ENCODE measurements at regions of chr4 and their contacts with region 1.

Region 1: DNA sequence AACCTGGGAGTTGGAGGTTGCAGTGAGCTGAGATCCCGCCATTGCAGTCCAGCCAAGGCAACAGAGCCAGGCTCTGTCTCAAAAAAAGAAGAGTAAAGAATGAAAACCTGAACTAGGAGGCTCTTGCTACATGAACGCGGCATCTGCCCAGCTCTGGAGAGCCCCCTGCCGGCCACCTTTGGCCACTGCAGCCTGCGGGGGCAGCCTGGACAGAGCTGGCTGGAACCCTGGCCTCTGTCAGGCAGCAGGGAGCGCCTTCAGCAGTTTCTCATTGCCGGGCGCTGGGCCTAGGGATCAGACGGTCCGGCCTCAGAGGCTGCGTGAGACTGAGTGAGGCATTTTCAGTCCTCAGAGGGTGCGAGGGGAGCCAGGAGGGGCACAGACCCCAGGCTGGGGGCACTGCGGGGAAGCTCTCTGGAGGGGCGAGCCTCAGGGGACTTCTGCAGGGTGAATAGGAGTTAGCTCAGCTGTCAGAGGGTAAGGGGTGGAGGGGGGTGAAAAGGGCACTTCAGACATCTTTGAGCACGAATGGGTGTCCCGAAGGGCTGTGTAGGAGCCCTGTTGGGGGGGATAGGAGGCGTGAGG is 17.5 kb downstream of the DOK7 start:
- DNase-seq: peak; percentile 5
- H3K4me3 ChIP-seq: no peak overlapping the region
- CTCF ChIP-seq: peak; percentile 99

Region 2: GRCh38 chr4:3193531-3194203 is 287.0 kb before region 1 on chr4:
- CTCF ChIA-PET with region 1: interaction called, 54 read pairs
- POLR2A ChIA-PET with region 1: no interaction called
- DNase-seq: no peak
- H3K4me3 ChIP-seq: no peak overlapping the region
- CTCF ChIP-seq: peak; percentile 20

Region 3: GRCh38 chr4:3346146-3346545 is 134.5 kb before region 1 on chr4:
- CTCF ChIA-PET with region 1: interaction called, 134 read pairs
- POLR2A ChIA-PET with region 1: no interaction called
- DNase-seq: peak; percentile 38
- H3K4me3 ChIP-seq: no peak overlapping the region
- CTCF ChIP-seq: peak; percentile 64

Region 4: GRCh38 chr4:3369781-3370674 is 110.6 kb before region 1 on chr4:
- CTCF ChIA-PET with region 1: interaction called, 13 read pairs
- POLR2A ChIA-PET with region 1: no interaction called
- DNase-seq: peak; percentile 70
- H3K4me3 ChIP-seq: peak overlapping the region; percentile 49
- CTCF ChIP-seq: no peak

Region 5: DNA sequence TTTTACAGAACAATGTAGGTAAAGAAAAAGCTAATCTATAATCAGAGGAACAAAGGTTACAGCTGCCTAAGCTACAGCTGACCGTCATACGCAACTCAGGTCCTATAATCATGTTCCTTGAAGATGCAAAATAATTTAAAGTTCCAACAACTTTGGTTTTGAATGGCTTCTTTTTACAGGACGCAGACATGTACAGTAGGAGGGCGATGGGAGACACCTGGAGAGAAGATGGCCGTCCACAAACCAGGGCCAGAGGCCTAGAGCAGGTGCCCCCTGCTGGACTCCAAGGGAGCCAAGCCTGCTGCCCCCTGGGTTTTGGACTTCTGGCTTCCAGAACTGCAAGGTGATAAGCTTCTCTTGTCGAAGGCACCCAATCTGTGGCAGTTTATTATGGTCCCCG is 28.2 kb before region 1 on chr4:
- CTCF ChIA-PET with region 1: interaction called, 13 read pairs
- POLR2A ChIA-PET with region 1: no interaction called
- DNase-seq: no peak
- H3K4me3 ChIP-seq: no peak overlapping the region
- CTCF ChIP-seq: peak; percentile 26

Region 6: DNA sequence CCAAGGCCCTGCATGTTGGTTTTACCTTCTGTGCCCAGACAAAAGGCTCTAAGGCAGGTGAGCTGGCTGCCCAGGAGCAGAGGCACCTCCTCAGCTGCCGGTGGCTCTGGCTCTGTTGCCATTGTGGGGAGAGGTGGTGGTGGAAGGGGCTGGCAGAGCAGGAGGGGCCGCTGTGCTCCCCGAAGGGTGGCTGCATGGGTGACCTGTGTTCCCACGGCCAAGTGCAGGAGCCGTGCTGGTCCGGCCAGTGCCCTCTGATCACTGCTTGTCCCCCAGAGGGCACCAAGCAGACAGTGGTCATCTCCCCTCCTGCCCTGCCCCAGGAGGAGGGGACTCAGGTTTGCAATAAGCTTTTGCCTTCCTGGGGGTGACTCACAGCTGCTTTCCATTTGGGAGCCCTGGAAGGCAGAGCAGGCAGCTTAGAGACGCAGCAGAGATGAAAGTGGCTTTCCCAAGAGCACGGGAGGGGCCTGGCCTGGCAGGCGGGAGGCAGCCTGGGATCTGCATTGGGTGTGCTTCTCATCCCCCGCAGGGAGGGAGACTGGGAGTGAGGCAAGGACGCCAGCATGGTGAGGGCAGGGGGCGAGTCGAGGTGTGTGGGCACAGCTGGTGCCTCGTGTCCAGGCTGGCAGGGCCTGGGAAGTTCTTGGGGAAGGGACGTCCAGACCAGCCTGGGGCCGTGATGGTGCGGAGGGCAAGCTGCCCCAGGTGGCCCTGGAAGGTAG is 11.2 kb after region 1 on chr4:
- CTCF ChIA-PET with region 1: interaction called, 27 read pairs
- POLR2A ChIA-PET with region 1: no interaction called
- DNase-seq: peak; percentile 7
- H3K4me3 ChIP-seq: no peak overlapping the region
- CTCF ChIP-seq: no peak

Region 7: DNA sequence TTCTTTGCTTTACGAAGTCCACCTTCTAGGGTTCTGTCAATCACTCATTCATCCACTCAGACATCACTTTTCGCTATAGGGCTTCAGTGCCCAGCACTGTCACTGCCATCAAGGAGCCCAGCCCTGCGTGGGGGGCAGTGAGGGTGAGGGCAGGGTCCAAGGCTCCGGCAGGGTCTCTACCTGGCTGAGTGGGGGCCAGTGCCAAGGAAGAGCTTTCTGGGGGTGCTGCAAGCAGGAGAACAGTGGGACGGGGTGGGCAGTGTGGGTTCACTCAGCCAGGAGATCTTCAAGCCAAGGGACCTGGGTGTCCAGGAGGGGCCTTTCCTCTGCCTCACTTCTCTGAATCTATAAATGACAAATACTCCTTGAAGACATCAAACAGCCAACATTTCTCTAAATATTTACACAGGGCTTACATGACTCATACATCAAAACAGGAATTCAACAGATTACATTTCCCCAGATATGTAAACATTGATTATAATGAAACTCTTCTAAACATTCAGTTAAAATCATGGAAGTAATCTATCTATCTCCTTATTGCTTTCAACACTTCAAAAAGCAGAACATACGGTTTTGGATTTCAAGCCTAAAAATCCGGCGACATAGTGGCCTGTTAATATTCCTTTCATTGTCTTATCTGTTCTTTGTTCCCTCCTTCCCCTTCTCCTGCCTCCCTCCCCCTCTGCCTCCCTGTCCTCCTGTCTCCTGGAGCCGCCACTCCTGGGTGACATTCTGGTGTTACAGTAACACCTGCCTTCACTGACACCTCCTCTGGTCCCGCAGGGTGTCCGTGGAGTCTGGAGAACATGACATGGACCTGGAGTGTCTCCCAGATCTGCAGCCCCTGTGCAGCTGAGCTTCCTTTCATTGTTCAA is 191.2 kb after region 1 on chr4:
- CTCF ChIA-PET with region 1: no interaction called
- POLR2A ChIA-PET with region 1: no interaction called
- DNase-seq: no peak
- H3K4me3 ChIP-seq: no peak overlapping the region
- CTCF ChIP-seq: no peak

Measured in AG04449 (cell line).